HepG2 (cell line): ENCODE measurements at regions of chr15 and their contacts with region 1.

Region 1: DNA sequence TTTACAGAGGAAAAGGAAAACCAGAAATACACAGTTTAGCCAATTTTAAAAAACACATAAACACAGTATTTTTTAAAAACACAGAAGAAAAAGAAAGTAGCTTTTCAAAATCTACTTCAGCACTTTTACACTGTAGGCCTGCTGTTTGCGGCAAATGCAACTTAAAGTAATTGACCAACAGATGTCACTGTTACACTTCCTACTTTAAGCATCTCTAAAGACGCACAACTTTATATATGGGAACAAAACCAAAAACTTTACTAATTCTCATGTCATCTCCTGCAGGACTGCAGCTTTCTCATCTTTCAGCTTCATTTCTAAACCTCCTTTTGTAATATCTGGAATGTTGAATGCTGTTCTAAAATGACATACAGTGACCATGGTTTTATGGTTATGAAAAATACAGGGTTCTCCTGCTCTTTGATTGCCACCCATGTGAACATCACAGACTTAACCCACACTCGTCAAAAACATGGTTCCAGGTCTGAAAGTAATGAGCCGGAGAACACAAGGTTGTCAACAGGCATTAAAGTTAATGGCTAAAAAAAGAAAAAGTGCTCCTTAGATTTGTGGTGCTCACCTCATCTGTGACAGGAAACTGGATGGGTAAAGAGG is 107.9 kb downstream of the FMN1 start:
- DNase-seq: peak; percentile 19
- ATAC-seq: no peak
- H3K4me3 ChIP-seq: no peak overlapping the region
- H3K27ac ChIP-seq: no peak overlapping the region
- H3K4me1 ChIP-seq: no peaks in the 10 kb centered on the region
- H3K27me3 ChIP-seq: peaks cover 0 to under 1% of the 10 kb centered on the region in 2 experiments; a peak in 1 of 5 replicates
- CTCF ChIP-seq: peak; percentile 62
- EP300 ChIP-seq: no peak
- POLR2A ChIP-seq: no peak
- RAD21 ChIP-seq: no peak

Region 2: GRCh38 chr15:31458591-31459399 is 1627.8 kb before region 1 on chr15:
- CTCF ChIA-PET with region 1: no interaction called
- POLR2A ChIA-PET with region 1: no interaction called
- in situ Hi-C with region 1: no loop called
- intact Hi-C with region 1: loop called (anchors 10 kb)
- DNase-seq: no peak
- ATAC-seq: no peak
- H3K4me3 ChIP-seq: no peak overlapping the region
- H3K27ac ChIP-seq: no peak overlapping the region
- H3K4me1 ChIP-seq: no peaks in the 10 kb centered on the region
- H3K27me3 ChIP-seq: peaks cover 1 to 13% of the 10 kb centered on the region in 2 experiments; a peak in 3 of 5 replicates
- CTCF ChIP-seq: no peak
- EP300 ChIP-seq: no peak
- POLR2A ChIP-seq: no peak
- RAD21 ChIP-seq: no peak

Region 3: DNA sequence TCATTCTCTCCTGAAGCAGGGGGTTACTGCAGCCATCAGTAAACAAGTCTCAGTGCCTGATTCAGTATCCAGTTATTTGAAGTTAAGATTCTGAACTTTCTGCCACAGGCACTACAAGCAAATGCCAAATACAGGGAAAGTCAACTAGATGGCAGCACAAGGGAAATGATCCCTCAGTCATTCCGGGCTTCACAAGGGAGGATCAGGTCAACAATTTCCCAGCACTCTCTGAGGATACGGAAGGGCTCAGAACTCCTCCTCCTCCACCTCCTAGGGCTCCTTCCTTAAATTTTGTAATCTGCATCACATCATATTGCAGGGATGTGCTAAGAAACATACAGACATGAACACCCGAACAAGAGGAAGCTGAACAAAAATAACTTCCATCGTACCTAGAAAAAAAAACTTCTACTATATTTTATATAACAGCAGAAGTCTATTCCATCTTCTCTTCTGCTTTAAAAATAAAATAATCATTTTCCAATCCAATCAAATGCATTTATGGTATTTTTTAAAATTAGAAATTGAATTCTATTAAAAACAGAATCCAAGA is 79.2 kb before region 1 on chr15:
- CTCF ChIA-PET with region 1: no interaction called
- POLR2A ChIA-PET with region 1: no interaction called
- in situ Hi-C with region 1: no loop called
- intact Hi-C with region 1: no loop called
- DNase-seq: no peak
- ATAC-seq: no peak
- H3K4me3 ChIP-seq: no peak overlapping the region
- H3K27ac ChIP-seq: no peak overlapping the region
- H3K4me1 ChIP-seq: no peaks in the 10 kb centered on the region
- H3K27me3 ChIP-seq: no peaks in the 10 kb centered on the region
- CTCF ChIP-seq: no peak
- EP300 ChIP-seq: no peak
- POLR2A ChIP-seq: no peak
- RAD21 ChIP-seq: no peak

Region 4: GRCh38 chr15:33284336-33284735 is 197.7 kb after region 1 on chr15:
- CTCF ChIA-PET with region 1: no interaction called
- POLR2A ChIA-PET with region 1: no interaction called
- in situ Hi-C with region 1: no loop called
- intact Hi-C with region 1: no loop called
- DNase-seq: no peak
- ATAC-seq: no peak
- H3K4me3 ChIP-seq: no peak overlapping the region
- H3K27ac ChIP-seq: no peak overlapping the region
- H3K4me1 ChIP-seq: no peaks in the 10 kb centered on the region
- H3K27me3 ChIP-seq: no peaks in the 10 kb centered on the region; a peak in 1 of 5 replicates
- CTCF ChIP-seq: no peak
- EP300 ChIP-seq: no peak
- POLR2A ChIP-seq: no peak
- RAD21 ChIP-seq: no peak

Region 5: GRCh38 chr15:33700695-33701304 is 614.2 kb after region 1 on chr15:
- CTCF ChIA-PET with region 1: no interaction called
- POLR2A ChIA-PET with region 1: no interaction called
- in situ Hi-C with region 1: no loop called
- intact Hi-C with region 1: loop called (anchors 5 kb)
- DNase-seq: peak; percentile 54
- ATAC-seq: peak; percentile 96
- H3K4me3 ChIP-seq: no peak overlapping the region
- H3K27ac ChIP-seq: no peak overlapping the region
- H3K4me1 ChIP-seq: no peaks in the 10 kb centered on the region
- H3K27me3 ChIP-seq: peaks cover 0 to 4% of the 10 kb centered on the region in 2 experiments; a peak in 2 of 5 replicates
- CTCF ChIP-seq: peak; percentile 89
- EP300 ChIP-seq: no peak
- POLR2A ChIP-seq: no peak
- RAD21 ChIP-seq: peak; percentile 48; the same call in 1 of the 2 replicates